ENCODE measurements at regions of chr3 and their contacts with region 1.

Region 1: DNA sequence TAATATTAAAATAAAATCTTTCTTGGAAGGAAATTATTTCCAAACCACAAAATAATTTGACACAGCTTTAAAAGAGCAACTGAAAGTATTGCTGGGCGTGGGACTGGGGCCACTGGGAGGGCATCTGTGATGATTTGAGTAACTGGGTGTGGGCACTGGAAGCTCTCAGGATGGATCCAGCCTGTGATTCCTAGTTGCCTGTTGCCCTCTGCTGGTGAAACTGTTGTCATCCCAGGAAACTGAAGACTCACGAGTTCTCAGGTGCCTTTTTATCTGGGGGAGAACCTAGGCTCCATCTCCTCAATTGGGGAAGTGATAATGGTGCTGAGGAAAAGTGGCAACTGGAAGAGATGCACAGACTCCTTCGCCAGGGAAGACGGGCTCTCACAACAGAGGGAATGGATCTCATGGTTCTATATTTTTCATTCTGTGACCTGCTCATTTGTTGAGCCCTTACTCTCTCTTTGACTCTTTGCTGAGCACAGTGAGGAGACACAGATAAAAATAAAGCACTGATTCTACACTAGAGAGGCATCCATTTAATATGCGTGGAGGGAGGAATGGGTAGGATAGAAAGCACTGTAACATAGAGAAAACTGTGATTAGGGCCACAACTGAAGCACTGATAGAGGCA is 61.6 kb downstream of the TPRG1 start:
- DNase-seq: peak; percentile 84
- H3K4me3 Mint-ChIP-seq: no peak overlapping the region
- H3K27ac Mint-ChIP-seq: no peak overlapping the region
- H3K4me1 Mint-ChIP-seq: peaks cover 35% of the 10 kb centered on the region
- H3K27me3 Mint-ChIP-seq: no peaks in the 10 kb centered on the region
- CTCF ChIP-seq: peak; percentile 83

Region 2: GRCh38 chr3:189041482-189042090 is 191.8 kb before region 1 on chr3:
- CTCF ChIA-PET with region 1: interaction called, 13 read pairs
- intact Hi-C with region 1: loop called (anchors 5 kb)
- DNase-seq: peak; percentile 74
- H3K4me3 Mint-ChIP-seq: no peak overlapping the region
- H3K27ac Mint-ChIP-seq: no peak overlapping the region
- H3K4me1 Mint-ChIP-seq: no peaks in the 10 kb centered on the region
- H3K27me3 Mint-ChIP-seq: peaks cover 11% of the 10 kb centered on the region
- CTCF ChIP-seq: peak; percentile 71

Region 3: DNA sequence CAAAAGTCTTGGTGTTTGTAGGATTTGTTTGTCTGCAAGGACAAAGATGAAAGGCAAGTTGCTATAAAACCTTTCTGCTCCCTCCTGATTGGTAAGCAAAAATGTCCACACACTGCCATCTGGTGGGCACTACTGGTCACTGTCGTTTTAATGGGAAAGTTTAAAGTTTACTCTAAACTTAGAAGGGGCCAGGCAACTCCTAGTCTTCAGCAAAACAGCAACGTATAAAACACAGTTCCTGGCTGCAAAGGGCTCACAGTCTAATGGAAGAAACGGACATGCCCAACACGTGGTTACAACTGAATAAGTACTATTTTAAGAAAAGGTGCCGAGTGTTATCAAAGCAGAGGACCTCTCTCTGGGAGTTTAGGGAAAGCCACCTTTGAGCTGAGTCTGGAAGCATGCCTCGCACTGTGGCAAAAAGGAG is 85.2 kb before region 1 on chr3:
- CTCF ChIA-PET with region 1: interaction called, 4 read pairs
- intact Hi-C with region 1: loop called (anchors 1 kb)
- DNase-seq: peak; percentile 74
- H3K4me3 Mint-ChIP-seq: no peak overlapping the region
- H3K27ac Mint-ChIP-seq: no peak overlapping the region
- H3K4me1 Mint-ChIP-seq: peaks cover 27% of the 10 kb centered on the region
- H3K27me3 Mint-ChIP-seq: no peaks in the 10 kb centered on the region
- CTCF ChIP-seq: peak; percentile 81

Region 4: GRCh38 chr3:189167027-189167766 is 66.1 kb before region 1 on chr3:
- CTCF ChIA-PET with region 1: interaction called, 3 read pairs
- intact Hi-C with region 1: loop called (anchors 5 kb)
- DNase-seq: peak; percentile 93
- H3K4me3 Mint-ChIP-seq: peak overlapping the region; percentile 13
- H3K27ac Mint-ChIP-seq: peak overlapping the region; percentile 50
- H3K4me1 Mint-ChIP-seq: peaks cover 41% of the 10 kb centered on the region
- H3K27me3 Mint-ChIP-seq: no peaks in the 10 kb centered on the region
- CTCF ChIP-seq: no peak

Region 5: DNA sequence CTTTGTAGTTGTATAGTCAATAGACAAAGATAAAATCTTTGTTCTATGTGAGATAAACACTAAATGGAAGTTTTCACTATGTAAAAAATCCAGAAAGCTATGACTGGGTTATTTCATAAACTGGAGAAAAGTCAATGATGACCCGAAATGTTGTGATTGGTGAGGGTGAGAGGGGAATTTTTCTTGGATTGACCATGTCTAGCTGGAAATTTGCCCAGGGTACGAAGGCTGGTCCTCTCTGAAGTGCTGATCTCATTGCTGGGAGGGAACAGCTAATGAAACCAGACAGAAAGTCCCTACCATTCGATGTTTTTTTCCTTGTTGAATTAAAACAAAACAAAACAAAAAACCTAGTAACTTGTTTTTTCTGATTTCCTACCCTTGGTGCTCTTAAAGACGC is 47.2 kb before region 1 on chr3:
- CTCF ChIA-PET with region 1: interaction called, 3 read pairs
- intact Hi-C with region 1: loop called (anchors 2 kb)
- DNase-seq: peak; percentile 75
- H3K4me3 Mint-ChIP-seq: no peak overlapping the region
- H3K27ac Mint-ChIP-seq: peak overlapping the region; percentile 87
- H3K4me1 Mint-ChIP-seq: peaks cover 52% of the 10 kb centered on the region
- H3K27me3 Mint-ChIP-seq: no peaks in the 10 kb centered on the region
- CTCF ChIP-seq: no peak

Region 6: DNA sequence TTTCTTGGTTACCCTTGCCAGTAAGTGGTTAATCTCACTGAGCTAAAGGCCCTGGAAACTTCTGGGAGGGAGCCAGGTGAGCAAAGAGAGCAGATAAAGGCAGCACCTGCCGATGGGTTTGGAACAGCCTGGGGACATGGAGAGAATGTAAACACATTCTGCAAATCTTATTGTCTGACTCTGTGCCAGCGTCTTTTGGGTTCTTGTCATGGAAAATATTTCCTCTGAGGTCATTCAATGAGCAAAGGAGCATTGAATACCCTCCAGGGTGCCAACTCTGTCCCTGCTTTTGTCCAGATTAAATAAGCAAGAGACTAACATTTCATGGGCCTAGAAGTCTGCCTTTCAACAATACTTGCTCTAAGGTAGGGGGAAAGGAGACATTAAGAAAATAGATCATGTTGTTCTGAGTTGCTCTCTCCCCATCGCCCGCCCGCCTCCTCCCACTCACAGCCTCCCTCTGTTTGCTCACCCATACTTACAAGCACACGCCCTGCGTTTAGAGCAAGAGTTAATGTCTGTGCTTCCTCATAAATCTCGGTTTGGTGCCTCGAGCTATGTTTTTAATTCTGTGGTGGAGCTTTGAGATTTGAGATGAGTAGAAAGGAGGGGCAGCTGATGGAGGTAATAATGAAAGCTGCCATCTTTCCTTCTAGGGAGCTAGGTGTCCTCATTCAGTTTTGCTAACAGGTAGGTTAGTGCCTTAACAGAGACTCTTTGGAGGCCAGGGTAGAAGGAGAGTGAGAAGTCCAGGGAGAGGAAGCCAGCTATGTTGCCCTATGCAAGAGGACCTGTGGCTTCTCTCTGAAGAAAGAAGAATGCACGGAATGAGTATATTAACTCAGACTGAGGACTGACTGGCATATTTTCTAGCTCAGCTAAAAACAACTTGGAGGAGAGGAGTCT is 71.4 kb after region 1 on chr3:
- CTCF ChIA-PET with region 1: no interaction called
- intact Hi-C with region 1: no loop called
- DNase-seq: peak; percentile 76
- H3K4me3 Mint-ChIP-seq: peak overlapping the region; percentile 52
- H3K27ac Mint-ChIP-seq: peak overlapping the region; percentile 87
- H3K4me1 Mint-ChIP-seq: peaks cover 36% of the 10 kb centered on the region
- H3K27me3 Mint-ChIP-seq: no peaks in the 10 kb centered on the region
- CTCF ChIP-seq: no peak

Measured in Calu3 (cell line).